H1 (cell line): ENCODE measurements at regions of chr7 and their contacts with region 1.

Region 1: DNA sequence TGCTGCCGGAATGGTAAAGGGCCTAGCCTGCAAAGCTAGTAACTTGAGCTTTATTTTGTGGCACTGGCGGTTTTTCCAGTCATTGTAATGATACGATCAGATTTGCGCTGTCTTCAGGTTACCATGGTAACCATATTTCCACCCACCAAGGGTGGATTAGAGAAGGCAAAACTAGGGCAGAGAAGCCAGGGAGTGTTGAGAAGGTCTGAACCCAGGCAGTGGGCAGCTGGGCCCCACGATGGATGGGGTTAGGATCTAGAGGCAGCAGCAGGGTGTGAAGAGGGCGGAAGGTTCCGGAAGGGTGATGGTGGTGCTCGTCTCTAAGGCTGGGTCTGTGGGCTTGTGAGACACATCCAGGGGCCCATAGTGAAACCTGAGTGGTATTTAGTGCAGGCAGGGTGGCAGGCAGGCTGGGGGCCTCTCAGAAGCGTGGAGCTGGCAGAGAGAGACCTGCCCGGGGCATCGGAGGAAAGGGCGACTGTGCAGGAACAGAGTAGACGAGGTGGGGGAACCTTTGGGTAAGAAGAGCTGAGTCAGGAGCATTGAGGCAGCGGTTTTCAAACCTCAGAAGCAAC is 87.9 kb upstream of the GTF2I start:
- DNase-seq: no peak
- H3K4me3 ChIP-seq: no peak overlapping the region
- H3K27ac ChIP-seq: no peak overlapping the region
- H3K4me1 ChIP-seq: 0 out of 7 replicates have a peak, but pooled peaks cover 0 to 5% (median 0%) of the 10 kb centered on the region in 4 experiments
- H3K27me3 ChIP-seq: no peaks in the 10 kb centered on the region
- CTCF ChIP-seq: no peak
- EP300 ChIP-seq: no peak
- POLR2A ChIP-seq: no peak
- RAD21 ChIP-seq: no peak

Region 2: GRCh38 chr7:74275401-74275881 is 294.1 kb before region 1 on chr7:
- CTCF ChIA-PET with region 1: no interaction called
- POLR2A ChIA-PET with region 1: no interaction called
- DNase-seq: peak in 1 of 2 experiments; percentile 78
- H3K4me3 ChIP-seq: no peak overlapping the region
- H3K27ac ChIP-seq: no peak overlapping the region
- H3K4me1 ChIP-seq: peaks cover 4 to 19% (median 13%) of the 10 kb centered on the region in 4 experiments
- H3K27me3 ChIP-seq: no peaks in the 10 kb centered on the region; a peak in 1 of 7 replicates
- CTCF ChIP-seq: peak; percentile 79 to 98 (median 90)
- EP300 ChIP-seq: no peak
- POLR2A ChIP-seq: no peak
- RAD21 ChIP-seq: peak; percentile 67 to 79

Region 3: DNA sequence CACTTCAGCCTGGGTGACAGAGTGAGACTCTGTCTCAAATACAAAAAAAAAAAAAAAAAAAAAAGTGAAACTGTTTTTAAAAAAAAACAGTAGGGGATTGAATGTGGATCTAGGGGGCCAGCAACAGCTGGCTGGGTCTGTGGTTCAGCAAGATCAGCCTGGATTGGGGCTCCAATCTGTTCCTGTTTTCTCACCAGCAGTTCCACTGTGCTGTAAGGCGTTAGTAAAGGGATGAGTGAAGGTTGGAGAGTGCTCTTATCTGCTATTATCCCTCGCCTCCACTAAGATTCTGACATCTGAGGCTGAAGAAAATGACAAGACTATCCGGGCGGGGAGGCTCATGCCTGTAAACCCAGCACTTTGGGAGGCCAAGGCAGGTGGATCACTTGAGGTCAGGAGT is 157.5 kb before region 1 on chr7:
- CTCF ChIA-PET with region 1: interaction called, 66 read pairs
- POLR2A ChIA-PET with region 1: interaction called, 4 read pairs
- DNase-seq: no peak
- H3K4me3 ChIP-seq: no peak overlapping the region
- H3K27ac ChIP-seq: no peak overlapping the region
- H3K4me1 ChIP-seq: no peaks in the 10 kb centered on the region
- H3K27me3 ChIP-seq: no peaks in the 10 kb centered on the region
- CTCF ChIP-seq: no peak
- EP300 ChIP-seq: no peak
- POLR2A ChIP-seq: no peak
- RAD21 ChIP-seq: no peak

Region 4: GRCh38 chr7:74554178-74554577 is 15.4 kb before region 1 on chr7:
- CTCF ChIA-PET with region 1: interaction called, 50 read pairs
- POLR2A ChIA-PET with region 1: interaction called, 4 read pairs
- DNase-seq: no peak
- H3K4me3 ChIP-seq: no peak overlapping the region
- H3K27ac ChIP-seq: no peak overlapping the region
- H3K4me1 ChIP-seq: no peaks in the 10 kb centered on the region
- H3K27me3 ChIP-seq: no peaks in the 10 kb centered on the region
- CTCF ChIP-seq: no peak
- EP300 ChIP-seq: no peak
- POLR2A ChIP-seq: no peak
- RAD21 ChIP-seq: no peak

Region 5: DNA sequence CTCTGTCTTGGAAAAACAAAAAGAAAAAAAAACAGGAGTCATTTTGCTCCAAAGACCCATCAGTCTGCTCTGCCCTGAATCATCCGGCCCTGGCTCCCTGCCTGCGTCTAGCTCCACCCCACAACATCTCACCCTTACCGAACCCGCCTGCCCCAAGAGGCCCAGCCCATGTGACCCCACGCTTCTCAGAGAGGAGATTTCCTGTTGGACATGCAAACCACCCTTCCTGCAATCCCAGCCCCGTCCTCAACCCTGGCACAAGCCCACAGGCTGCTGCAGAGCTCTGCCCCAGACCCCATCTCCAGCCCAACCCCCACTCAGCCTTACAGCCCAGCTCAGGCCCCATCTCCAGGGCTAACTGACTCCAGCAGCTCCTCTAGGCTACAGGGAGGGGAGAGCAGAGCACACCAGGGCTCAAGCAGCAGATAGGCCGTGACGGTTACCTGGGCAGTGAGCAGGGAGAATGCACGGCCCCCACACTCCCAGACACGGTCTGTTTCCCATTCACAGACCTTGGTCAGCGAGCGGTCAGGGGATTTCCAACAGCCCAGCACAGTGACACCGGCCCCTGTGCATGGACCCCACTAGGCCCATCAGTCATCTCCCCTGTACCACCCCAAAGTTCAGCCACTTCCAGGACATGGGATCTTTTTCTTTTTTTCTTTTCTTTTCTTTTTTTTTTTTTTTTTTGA is 18.0 kb after region 1 on chr7:
- CTCF ChIA-PET with region 1: interaction called, 84 read pairs
- POLR2A ChIA-PET with region 1: no interaction called
- DNase-seq: peak in 1 of 2 experiments; percentile 69
- H3K4me3 ChIP-seq: no peak overlapping the region
- H3K27ac ChIP-seq: 0 out of 2 replicates have a peak overlapping the region, but pooled peaks have one; percentile 32
- H3K4me1 ChIP-seq: peaks cover 4 to 10% (median 8%) of the 10 kb centered on the region in 4 experiments; a peak in 6 of 7 replicates
- H3K27me3 ChIP-seq: no peaks in the 10 kb centered on the region
- CTCF ChIP-seq: no peak
- EP300 ChIP-seq: no peak
- POLR2A ChIP-seq: peak in 1 of 2 experiments; percentile 35; a peak in 1 of 3 replicates
- RAD21 ChIP-seq: peak in 1 of 2 experiments; percentile 16; a peak in 2 of 4 replicates